ENCODE measurements at regions of chr3 and their contacts with region 1.

Region 1: GRCh38 chr3:10192953-10193691 is 28.4 kb downstream of the IRAK2 start:
- DNase-seq: no peak
- CTCF ChIP-seq: peak; percentile 20

Region 2: GRCh38 chr3:9455596-9456131 is 737.5 kb before region 1 on chr3:
- CTCF ChIA-PET with region 1: no interaction called
- POLR2A ChIA-PET with region 1: no interaction called
- DNase-seq: no peak
- CTCF ChIP-seq: no peak

Region 3: DNA sequence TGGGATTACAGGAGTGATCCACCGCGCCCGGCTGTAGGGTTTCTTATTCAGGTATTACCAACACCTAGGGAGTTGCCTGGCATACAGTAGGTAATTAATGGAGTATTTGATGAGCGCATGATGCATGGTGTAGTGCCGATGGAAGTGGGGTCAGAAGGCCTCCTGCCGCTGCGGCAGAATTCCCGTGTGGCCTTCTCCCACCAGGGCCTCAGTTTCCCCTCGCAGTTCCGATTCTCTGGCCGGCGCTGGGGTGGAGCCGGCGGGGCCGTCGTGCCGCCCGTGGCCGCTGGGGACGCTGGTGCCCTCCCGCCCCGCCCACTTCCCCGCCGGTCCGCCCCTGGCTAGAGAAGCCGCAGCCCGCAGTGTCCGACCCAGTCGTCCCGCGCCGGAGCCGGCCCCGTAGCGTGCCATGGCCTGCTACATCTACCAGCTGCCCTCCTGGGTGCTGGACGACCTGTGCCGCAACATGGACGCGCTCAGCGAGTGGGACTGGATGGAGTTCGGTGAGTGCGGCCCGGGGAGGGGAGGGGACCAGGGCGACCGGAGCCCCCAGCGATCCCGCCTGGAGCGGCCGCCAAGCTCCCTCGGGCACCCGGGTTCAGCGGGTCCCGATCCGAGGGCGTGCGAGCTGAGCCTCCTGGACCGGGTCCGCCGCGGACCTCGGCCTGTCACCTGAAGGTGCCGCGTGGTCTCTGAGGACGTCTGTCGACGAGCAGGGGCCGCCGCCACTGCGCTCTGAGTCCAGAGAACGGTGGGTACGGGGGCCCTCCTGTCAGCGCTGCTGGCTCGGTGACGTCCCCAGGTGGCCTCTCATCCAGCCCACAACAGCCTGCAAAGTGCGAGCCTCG is 28.4 kb before region 1 on chr3 and contains the start of gene IRAK2:
- CTCF ChIA-PET with region 1: interaction called, 12 read pairs
- POLR2A ChIA-PET with region 1: interaction called, 4 read pairs
- DNase-seq: peak; percentile 90
- CTCF ChIP-seq: peak; percentile 75

Region 4: DNA sequence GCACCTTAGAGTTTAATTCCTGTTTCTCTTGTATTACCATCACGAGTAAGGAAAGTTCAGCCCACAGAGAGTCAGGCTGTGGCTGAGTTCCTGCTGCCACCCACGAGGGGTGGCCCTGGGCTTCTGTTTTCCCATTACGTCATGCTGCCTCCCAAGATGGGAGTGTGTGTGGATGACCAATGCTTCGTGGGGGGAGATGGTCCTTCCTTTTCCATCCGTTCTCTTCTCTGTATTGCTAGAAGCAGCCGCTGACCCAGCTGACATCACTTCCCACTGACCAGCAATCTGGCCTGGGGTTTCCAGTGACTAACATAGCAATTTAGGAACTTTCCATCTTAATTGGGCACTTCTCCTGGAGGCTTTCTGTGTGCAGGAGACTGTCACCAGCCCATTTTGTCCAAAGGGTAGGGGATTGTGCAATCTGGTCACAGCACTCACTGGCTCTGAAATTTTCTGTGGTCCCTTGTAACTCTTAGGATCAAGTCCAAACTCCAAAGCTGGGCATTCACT is 19.1 kb before region 1 on chr3:
- CTCF ChIA-PET with region 1: interaction called, 15 read pairs
- POLR2A ChIA-PET with region 1: interaction called, 7 read pairs
- DNase-seq: peak; percentile 53
- CTCF ChIP-seq: no peak

Region 5: GRCh38 chr3:10205451-10206165 is 12.5 kb after region 1 on chr3:
- CTCF ChIA-PET with region 1: interaction called, 26 read pairs
- POLR2A ChIA-PET with region 1: interaction called, 3 read pairs
- DNase-seq: no peak
- CTCF ChIP-seq: no peak

Region 6: DNA sequence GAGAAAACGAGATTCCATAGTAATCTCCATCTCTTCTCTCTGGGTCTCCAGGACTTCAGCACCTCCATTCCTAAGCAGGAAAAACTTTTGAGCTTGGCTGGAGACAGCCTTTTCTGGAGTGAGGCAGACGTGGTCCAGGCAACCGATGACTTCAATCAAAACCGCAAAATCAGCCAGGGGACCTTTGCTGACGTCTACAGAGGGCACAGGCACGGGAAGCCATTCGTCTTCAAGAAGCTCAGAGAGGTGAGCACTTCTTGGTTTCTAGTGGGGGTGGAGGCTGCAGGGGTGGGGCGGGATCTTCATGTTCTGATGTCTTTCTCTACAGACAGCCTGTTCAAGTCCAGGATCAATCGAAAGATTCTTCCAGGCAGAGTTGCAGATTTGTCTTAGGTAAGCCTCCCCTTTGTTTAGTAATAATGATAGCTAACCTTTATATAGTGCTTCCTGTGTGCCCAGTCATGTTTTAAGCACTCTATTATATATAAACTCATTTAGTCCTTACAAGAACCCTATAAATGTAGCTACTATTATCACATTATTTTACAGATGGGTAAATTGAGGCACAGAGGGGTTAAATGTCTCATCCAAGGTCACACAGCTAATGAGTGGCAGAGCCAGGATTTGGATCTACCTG is 20.2 kb after region 1 on chr3:
- CTCF ChIA-PET with region 1: interaction called, 11 read pairs
- POLR2A ChIA-PET with region 1: interaction called, 3 read pairs
- DNase-seq: no peak
- CTCF ChIP-seq: no peak

Region 7: GRCh38 chr3:10224784-10225665 is 31.9 kb after region 1 on chr3:
- CTCF ChIA-PET with region 1: interaction called, 28 read pairs
- POLR2A ChIA-PET with region 1: no interaction called
- DNase-seq: peak; percentile 75
- CTCF ChIP-seq: peak; percentile 80

Region 8: DNA sequence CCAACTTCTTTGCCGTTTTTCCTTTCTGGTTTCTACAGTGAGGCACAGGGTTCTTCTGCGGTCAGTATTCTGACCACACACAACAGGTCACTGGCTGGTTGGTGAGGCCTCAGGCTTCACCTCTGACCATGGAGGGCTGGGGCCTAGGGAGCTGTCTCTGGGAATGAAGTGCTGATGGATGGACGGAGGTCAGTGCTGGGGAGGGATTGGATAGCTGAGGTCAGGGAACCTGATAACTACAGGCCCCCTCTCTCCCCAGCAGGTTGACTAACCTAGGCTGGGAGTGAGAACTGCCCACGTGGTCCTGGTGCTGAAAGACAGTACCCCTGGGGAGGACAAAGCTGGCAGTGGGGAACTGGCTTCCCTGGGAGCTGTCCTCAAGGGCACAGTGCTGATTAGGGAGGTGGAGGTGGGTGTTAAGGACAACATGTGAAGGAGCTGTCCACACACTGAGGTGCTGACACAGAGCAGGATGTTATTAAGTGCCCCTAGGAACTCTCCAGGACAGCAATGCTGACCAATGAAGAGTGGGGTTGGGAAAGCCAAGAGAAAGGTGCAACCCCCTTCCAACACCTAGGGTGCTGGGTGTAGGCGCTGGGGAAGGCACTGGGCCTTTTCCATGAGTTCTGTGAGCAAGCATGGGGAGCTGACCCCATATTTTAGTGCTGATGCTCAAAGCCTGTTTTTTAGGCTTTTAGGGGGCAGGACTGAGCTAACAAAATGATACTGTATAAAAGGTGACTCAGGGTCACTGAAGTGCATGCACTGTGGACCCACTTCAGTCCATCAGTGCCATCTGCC is 267.0 kb after region 1 on chr3:
- CTCF ChIA-PET with region 1: no interaction called
- POLR2A ChIA-PET with region 1: no interaction called
- DNase-seq: peak; percentile 62
- CTCF ChIP-seq: no peak